Endothelial cell of umbilical vein (primary cell): ENCODE measurements at regions of chr22 and their contacts with region 1.

Region 1: GRCh38 chr22:41857155-41857859 is 24.4 kb downstream of the SREBF2 start:
- DNase-seq: peak; percentile 70
- H3K4me3 ChIP-seq: no peak overlapping the region
- H3K27ac ChIP-seq: no peak overlapping the region
- H3K4me1 ChIP-seq: peaks cover 10% of the 10 kb centered on the region
- H3K27me3 ChIP-seq: no peaks in the 10 kb centered on the region
- CTCF ChIP-seq: peak; percentile 60 to 65
- POLR2A ChIP-seq: no peak

Region 2: GRCh38 chr22:41841085-41841659 is 16.1 kb before region 1 on chr22:
- CTCF ChIA-PET with region 1: interaction called, 19 read pairs
- POLR2A ChIA-PET with region 1: no interaction called
- dilution Hi-C with region 1: no loop called
- intact Hi-C with region 1: no loop called
- DNase-seq: no peak
- H3K4me3 ChIP-seq: no peak overlapping the region
- H3K27ac ChIP-seq: no peak overlapping the region
- H3K4me1 ChIP-seq: peaks cover 7% of the 10 kb centered on the region
- H3K27me3 ChIP-seq: no peaks in the 10 kb centered on the region
- CTCF ChIP-seq: no peak
- POLR2A ChIP-seq: no peak